Left ventricle myocardium inferior (tissue), 1 donor: ENCODE measurements at regions of chr14 and their contacts with region 1.

Region 1: DNA sequence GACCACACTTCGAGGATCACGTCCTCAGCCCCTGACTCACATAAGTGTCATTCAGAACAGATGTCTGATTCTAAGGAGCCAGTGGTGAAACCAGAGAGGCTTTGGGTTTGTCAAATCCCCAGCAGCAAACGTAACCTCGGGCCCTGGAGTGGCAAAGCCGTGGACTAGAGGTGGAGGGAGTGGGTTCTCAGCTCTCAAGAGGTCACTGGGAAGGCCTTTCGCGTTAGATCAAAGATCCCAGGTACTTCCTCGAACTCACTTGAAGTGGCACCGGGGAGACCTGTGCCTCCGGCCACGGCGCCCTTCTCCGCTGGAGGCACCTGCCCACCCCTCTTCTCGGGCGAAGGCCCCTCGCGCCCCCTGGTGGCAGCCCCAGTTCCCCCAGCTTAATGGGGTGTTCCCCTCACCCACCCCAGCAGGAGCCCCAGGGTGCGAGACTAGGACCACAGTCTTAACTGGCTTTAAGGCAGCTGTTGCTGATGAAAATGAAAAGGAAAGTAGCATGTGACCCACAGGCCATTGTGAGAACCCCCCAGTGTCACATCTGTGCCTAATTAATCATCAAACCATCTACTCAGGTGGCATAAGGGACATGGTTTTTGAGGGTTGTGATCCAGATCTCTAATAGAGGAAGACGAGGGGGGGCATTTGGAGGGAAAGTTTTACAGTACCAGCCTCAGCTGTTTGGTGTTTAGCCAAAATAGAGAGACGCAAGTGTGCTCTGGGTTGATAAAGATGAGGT is 672 bp upstream of the ESR2 start:
- DNase-seq: peak; percentile 68
- H3K4me3 ChIP-seq: peak overlapping the region; percentile 68
- H3K27ac ChIP-seq: no peak overlapping the region
- H3K4me1 ChIP-seq: peaks cover 18% of the 10 kb centered on the region
- H3K27me3 ChIP-seq: peaks cover 29% of the 10 kb centered on the region
- CTCF ChIP-seq: peak; percentile 85

Region 2: GRCh38 chr14:63795532-63795931 is 499.3 kb before region 1 on chr14:
- intact Hi-C with region 1: loop called (anchors 10 kb)
- DNase-seq: no peak
- H3K4me3 ChIP-seq: no peak overlapping the region
- H3K27ac ChIP-seq: no peak overlapping the region
- H3K4me1 ChIP-seq: peaks cover 4% of the 10 kb centered on the region
- H3K27me3 ChIP-seq: no peaks in the 10 kb centered on the region
- CTCF ChIP-seq: no peak

Region 3: DNA sequence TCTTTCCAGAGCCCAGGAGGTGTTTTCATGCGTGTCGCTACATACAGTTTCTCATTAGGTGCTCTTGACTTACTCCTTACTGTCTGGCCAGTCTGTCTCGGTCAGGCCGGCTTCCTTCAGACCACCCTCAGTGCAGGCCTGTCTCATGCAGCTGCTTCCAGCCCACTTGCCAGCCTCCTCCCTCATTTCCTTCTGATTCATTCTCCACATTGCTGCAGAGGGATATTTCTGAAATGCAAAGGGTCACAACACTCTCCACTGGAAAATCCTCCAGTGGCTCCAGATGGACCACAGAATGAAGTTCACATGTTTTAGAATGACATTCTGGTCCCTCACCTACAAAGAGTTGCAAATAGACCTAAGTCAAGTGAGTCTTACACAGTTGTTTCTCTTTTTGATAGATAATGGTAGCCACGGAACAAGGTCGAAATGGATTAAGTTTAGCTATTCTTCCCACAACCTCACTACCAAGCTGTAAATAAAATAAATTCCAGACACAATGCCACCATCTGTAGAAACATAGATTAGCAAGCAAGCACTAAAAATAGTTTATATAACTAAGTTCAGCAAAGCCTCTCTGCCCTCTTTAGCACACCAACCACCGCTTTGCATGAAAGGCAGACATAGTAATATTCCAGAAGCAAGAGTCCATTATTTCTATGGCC is 147.6 kb before region 1 on chr14:
- intact Hi-C with region 1: loop called (anchors 10 kb)
- DNase-seq: no peak
- H3K4me3 ChIP-seq: no peak overlapping the region
- H3K27ac ChIP-seq: no peak overlapping the region
- H3K4me1 ChIP-seq: no peaks in the 10 kb centered on the region
- H3K27me3 ChIP-seq: no peaks in the 10 kb centered on the region
- CTCF ChIP-seq: no peak

Region 4: GRCh38 chr14:64997108-64997794 is 702.4 kb after region 1 on chr14:
- intact Hi-C with region 1: no loop called
- DNase-seq: no peak
- H3K4me3 ChIP-seq: no peak overlapping the region
- H3K27ac ChIP-seq: no peak overlapping the region
- H3K4me1 ChIP-seq: peaks cover 22% of the 10 kb centered on the region
- H3K27me3 ChIP-seq: no peaks in the 10 kb centered on the region
- CTCF ChIP-seq: no peak